ENCODE measurements at regions of chr18 and their contacts with region 1.

Region 1: GRCh38 chr18:23032030-23032582 is 99.0 kb downstream of the RBBP8 start:
- DNase-seq: no peak
- H3K4me3 ChIP-seq: no peak overlapping the region
- H3K27ac ChIP-seq: peak overlapping the region in 1 of 2 experiments; percentile 44; a peak in 2 of 4 replicates
- H3K4me1 ChIP-seq: peaks cover 0 to 17% of the 10 kb centered on the region in 2 experiments; a peak in 2 of 4 replicates
- H3K27me3 ChIP-seq: no peaks in the 10 kb centered on the region
- CTCF ChIP-seq: no peak
- EP300 ChIP-seq: no peak
- RAD21 ChIP-seq: no peak

Region 2: DNA sequence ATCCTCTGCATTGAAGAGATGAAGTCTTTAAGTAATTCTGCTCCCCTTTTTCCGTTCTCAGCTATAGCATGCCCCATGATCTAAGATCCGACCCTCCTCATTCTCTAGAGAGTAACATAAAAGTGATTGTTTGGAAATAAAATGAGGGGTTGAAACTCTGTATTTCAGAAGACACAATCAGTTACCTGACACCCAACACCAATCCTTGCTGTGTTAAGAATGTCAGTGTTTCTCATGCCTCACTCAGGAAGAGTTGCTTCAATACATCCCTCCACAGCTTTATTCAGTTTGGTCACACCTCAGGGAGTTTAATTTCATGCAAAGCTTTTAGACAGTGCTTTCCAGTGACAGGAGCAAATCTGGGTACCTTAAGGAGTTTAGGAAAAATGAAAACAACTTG is 148.9 kb before region 1 on chr18:
- CTCF ChIA-PET with region 1: no interaction called
- POLR2A ChIA-PET with region 1: no interaction called
- DNase-seq: no peak
- H3K4me3 ChIP-seq: no peak overlapping the region
- H3K27ac ChIP-seq: no peak overlapping the region
- H3K4me1 ChIP-seq: no peaks in the 10 kb centered on the region
- H3K27me3 ChIP-seq: no peaks in the 10 kb centered on the region
- CTCF ChIP-seq: no peak
- EP300 ChIP-seq: no peak
- RAD21 ChIP-seq: no peak

Region 3: GRCh38 chr18:23067236-23067635 is 35.1 kb after region 1 on chr18:
- CTCF ChIA-PET with region 1: no interaction called
- POLR2A ChIA-PET with region 1: no interaction called
- DNase-seq: no peak
- H3K4me3 ChIP-seq: no peak overlapping the region
- H3K27ac ChIP-seq: no peak overlapping the region
- H3K4me1 ChIP-seq: no peaks in the 10 kb centered on the region
- H3K27me3 ChIP-seq: no peaks in the 10 kb centered on the region
- CTCF ChIP-seq: no peak
- EP300 ChIP-seq: no peak
- RAD21 ChIP-seq: no peak

Region 4: GRCh38 chr18:23377669-23378301 is 345.7 kb after region 1 on chr18:
- CTCF ChIA-PET with region 1: interaction called, 17 read pairs
- POLR2A ChIA-PET with region 1: no interaction called
- DNase-seq: no peak
- H3K4me3 ChIP-seq: no peak overlapping the region
- H3K27ac ChIP-seq: peak overlapping the region in 1 of 2 experiments; percentile 82; a peak in 2 of 4 replicates
- H3K4me1 ChIP-seq: peaks cover 0 to 30% of the 10 kb centered on the region in 2 experiments; a peak in 1 of 4 replicates
- H3K27me3 ChIP-seq: no peaks in the 10 kb centered on the region
- CTCF ChIP-seq: no peak
- EP300 ChIP-seq: peak in 1 of 2 experiments; percentile 58; a peak in 2 of 4 replicates
- RAD21 ChIP-seq: no peak